ENCODE measurements at regions of chr2 and their contacts with region 1.

Region 1: GRCh38 chr2:150787353-150788093 is 300.1 kb upstream of the RND3 start:
- DNase-seq: no peak
- ATAC-seq: peak in 3 of 4 donors; percentile 34 to 56 (median 38)
- H3K4me3 ChIP-seq: no peak overlapping the region
- H3K27ac ChIP-seq: peak overlapping the region in 7 of 12 donors; percentile 4 to 51 (median 22)
- H3K4me1 ChIP-seq: peaks cover 0 to 34% (median 10%) of the 10 kb centered on the region in 12 donors
- H3K27me3 ChIP-seq: no peaks in the 10 kb centered on the region
- CTCF ChIP-seq: no peak
- POLR2A ChIP-seq: no peak

Region 2: DNA sequence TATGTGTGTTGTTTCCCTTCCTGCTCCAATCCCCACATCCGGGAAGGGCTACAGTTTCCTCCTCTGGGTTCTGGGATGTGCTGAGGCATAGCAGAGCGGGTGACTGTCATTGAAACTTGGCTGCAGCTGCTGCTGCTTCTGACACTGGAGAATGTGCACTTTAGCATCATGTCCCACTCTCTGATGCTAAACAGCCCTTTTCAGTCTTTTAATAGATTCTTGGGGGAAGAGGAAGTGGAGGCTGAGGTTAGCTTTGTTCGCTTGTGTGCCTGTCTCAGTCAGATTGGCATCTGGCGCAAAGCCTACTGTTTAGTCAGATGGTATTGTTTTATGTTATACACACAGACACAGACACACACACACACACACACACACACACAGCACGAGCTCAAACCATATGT is 163.5 kb before region 1 on chr2:
- intact Hi-C with region 1: loop called in 1 of 10 experiments (anchors 10 kb)
- DNase-seq: no peak
- ATAC-seq: peak in 1 of 4 donors; percentile 20
- H3K4me3 ChIP-seq: no peak overlapping the region
- H3K27ac ChIP-seq: no peak overlapping the region
- H3K4me1 ChIP-seq: peaks cover 0 to 34% (median 22%) of the 10 kb centered on the region in 12 donors
- H3K27me3 ChIP-seq: no peaks in the 10 kb centered on the region
- CTCF ChIP-seq: no peak
- POLR2A ChIP-seq: no peak

Region 3: GRCh38 chr2:150698016-150698661 is 89.4 kb before region 1 on chr2:
- intact Hi-C with region 1: loop called in 1 of 10 experiments (anchors 5 kb)
- DNase-seq: no peak
- ATAC-seq: peak in 2 of 4 donors; percentile 49 to 71
- H3K4me3 ChIP-seq: no peak overlapping the region
- H3K27ac ChIP-seq: peak overlapping the region in 8 of 12 donors; percentile 2 to 54 (median 28)
- H3K4me1 ChIP-seq: peaks cover 0 to 5% (median 0%) of the 10 kb centered on the region in 12 donors
- H3K27me3 ChIP-seq: no peaks in the 10 kb centered on the region
- CTCF ChIP-seq: no peak
- POLR2A ChIP-seq: no peak

Measured in heart left ventricle (tissue), 16 donors.